Activated naive CD4-positive, alpha-beta T cell treated with anti-CD3 and anti-CD28 coated beads for 36 hours (primary cell): ENCODE measurements at regions of chr5 and their contacts with region 1.

Region 1: DNA sequence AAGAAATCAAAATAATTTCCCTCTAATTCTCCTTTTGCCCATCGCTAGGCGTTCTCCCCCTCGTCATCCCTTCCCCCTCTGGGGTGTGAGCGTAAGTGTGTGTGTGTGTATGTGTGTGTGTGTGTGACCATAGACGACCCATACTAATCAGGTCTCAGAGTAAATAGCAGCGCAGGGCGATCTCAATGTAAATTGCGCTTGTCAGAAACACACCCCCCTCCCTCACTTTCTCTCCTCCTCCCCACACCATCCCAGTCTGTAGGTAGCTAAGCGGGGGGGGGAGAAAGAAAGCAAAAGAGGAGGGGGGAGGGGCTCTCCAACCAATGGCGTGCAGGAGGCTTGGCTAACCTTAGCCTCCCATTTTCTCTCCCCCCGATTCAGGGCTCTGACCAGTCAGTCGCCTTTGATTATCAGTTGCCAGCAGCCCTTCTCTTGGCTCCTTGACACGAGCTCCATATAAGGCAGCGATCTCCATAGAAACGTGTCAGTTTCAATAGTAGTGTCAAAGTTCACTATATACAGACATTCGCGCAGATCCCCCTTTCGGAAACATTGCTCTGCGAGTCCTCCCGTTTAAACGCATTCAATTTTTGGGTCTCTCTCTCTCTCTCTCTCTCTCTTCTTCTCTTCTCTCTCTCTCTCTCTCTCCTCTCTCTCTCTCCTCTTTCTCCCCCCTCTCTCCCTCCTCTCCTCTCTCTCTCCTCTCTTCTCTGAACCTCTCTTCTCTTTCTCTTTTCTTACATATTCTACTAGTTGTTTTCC is at the start of gene NR2F1:
- DNase-seq: no peak
- H3K4me3 Mint-ChIP-seq: peak within 1 kb of the TSS; percentile 54
- H3K27ac Mint-ChIP-seq: no peak within 1 kb of the TSS
- H3K4me1 Mint-ChIP-seq: peaks cover 28% of the 10 kb centered on the region
- H3K27me3 Mint-ChIP-seq: peaks cover 46% of the 10 kb centered on the region
- total RNA-seq, gene NR2F1: not detected

Region 2: DNA sequence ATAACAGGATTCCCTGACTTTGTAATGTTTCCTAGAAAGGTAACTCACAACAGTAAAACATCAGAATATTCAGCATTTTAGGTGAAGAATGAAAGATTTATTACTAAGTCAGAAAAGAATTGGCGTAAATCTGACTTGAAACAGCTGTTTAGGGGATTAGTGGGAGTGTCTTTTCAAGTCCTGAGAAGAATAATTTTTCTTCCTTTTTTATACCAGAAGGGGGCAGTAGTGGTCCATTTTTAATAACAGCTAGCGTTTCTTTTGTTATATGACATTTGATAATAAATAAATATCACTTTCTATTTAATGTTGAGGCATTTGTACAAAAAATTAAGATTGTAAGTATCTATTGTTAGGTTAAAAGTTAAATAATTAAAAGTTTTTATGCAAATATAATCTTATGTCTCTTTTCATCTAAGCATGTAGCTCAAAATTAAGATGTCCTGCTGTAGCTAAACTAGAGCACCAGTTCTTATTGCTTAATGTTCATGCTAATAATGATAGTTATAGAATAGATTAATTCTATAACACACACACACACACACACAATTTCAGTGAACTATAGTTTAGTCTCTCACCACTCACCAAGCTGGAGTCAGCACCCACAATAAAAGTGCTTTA is 1941.0 kb before region 1 on chr5:
- CTCF ChIA-PET with region 1: no interaction called
- intact Hi-C with region 1: loop called (anchors 10 kb)
- DNase-seq: no peak
- H3K4me3 Mint-ChIP-seq: no peak overlapping the region
- H3K27ac Mint-ChIP-seq: no peak overlapping the region
- H3K4me1 Mint-ChIP-seq: no peaks in the 10 kb centered on the region
- H3K27me3 Mint-ChIP-seq: peaks cover 1% of the 10 kb centered on the region

Region 3: DNA sequence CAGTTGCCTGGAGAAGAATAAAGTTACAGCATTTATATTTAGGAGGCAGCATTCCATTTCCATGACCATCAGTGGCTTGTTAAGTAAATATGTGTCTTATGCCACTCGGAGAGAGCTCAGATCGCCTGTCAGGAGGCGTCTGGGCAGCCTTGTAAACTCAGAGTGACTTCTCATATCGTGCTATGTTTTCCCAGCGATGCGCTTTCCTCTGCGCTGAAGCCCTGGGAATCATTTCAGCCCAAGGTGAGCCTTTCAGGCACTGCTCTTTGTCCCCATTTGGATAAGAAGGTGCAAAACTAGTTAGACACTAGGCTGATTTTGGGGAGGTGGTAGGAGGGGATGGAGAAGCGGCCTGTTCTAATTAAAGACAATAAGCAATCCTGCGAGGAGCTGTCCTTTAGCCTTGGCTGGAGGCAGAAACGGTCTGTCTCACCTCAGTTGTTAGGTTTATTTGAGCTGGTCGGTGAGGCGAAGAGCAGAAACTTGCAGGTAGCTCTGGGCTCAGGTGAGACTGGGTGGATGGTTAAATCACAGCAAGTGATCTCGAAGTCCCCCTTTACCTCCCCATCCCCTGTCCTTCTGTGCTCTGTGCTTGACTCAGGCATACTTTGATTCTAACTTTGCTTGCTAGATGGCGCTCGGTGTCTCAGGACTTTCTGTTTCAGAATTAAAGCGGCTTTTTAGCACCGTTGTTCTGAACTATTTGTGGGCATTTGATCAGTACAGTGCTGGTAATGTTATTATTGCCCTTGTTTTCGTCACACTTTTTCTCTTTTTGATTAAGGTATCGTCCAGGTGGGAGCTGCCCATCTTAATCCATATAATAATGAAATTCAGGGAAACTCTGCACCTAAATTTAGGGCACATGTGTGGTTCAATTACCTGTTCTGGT is 24.8 kb after region 1 on chr5:
- CTCF ChIA-PET with region 1: interaction called, 9 read pairs
- intact Hi-C with region 1: loop called (anchors 2 kb)
- DNase-seq: peak; percentile 58
- H3K4me3 Mint-ChIP-seq: no peak overlapping the region
- H3K27ac Mint-ChIP-seq: no peak overlapping the region
- H3K4me1 Mint-ChIP-seq: peaks cover 6% of the 10 kb centered on the region
- H3K27me3 Mint-ChIP-seq: peaks cover 67% of the 10 kb centered on the region

Region 4: GRCh38 chr5:93800988-93801811 is 218.3 kb after region 1 on chr5:
- CTCF ChIA-PET with region 1: interaction called, 11 read pairs
- intact Hi-C with region 1: loop called (anchors 1 kb)
- DNase-seq: peak; percentile 34
- H3K4me3 Mint-ChIP-seq: no peak overlapping the region
- H3K27ac Mint-ChIP-seq: no peak overlapping the region
- H3K4me1 Mint-ChIP-seq: peaks cover 2% of the 10 kb centered on the region
- H3K27me3 Mint-ChIP-seq: no peaks in the 10 kb centered on the region

Region 5: GRCh38 chr5:94111209-94112004 is 528.5 kb after region 1 on chr5:
- CTCF ChIA-PET with region 1: no interaction called
- intact Hi-C with region 1: loop called (anchors 5 kb)
- DNase-seq: peak; percentile 96
- H3K4me3 Mint-ChIP-seq: peak overlapping the region; percentile 89
- H3K27ac Mint-ChIP-seq: peak overlapping the region; percentile 84
- H3K4me1 Mint-ChIP-seq: peaks cover 22% of the 10 kb centered on the region
- H3K27me3 Mint-ChIP-seq: peaks cover 7% of the 10 kb centered on the region

Region 6: GRCh38 chr5:94618493-94619328 is 1035.9 kb after region 1 on chr5 and contains the starts of genes KIAA0825 and SLF1:
- CTCF ChIA-PET with region 1: no interaction called
- intact Hi-C with region 1: loop called (anchors 5 kb)
- DNase-seq: peak; percentile 93
- H3K4me3 Mint-ChIP-seq: peak within 1 kb of the TSS; percentile 96
- H3K27ac Mint-ChIP-seq: peak within 1 kb of the TSS; percentile 93
- H3K4me1 Mint-ChIP-seq: peaks cover 34% of the 10 kb centered on the region
- H3K27me3 Mint-ChIP-seq: no peaks in the 10 kb centered on the region
- total RNA-seq, gene KIAA0825: 0.07 to 0.24 TPM
- total RNA-seq, gene SLF1: 12.4 to 12.8 TPM

Region 7: GRCh38 chr5:94849821-94850736 is 1267.2 kb after region 1 on chr5:
- CTCF ChIA-PET with region 1: no interaction called
- intact Hi-C with region 1: loop called (anchors 1 kb)
- DNase-seq: peak; percentile 40
- H3K4me3 Mint-ChIP-seq: no peak overlapping the region
- H3K27ac Mint-ChIP-seq: no peak overlapping the region
- H3K4me1 Mint-ChIP-seq: peaks cover 3% of the 10 kb centered on the region
- H3K27me3 Mint-ChIP-seq: peaks cover 6% of the 10 kb centered on the region